Aorta (tissue), 5 donors: ENCODE measurements at regions of chr7 and their contacts with region 1.

Region 1: DNA sequence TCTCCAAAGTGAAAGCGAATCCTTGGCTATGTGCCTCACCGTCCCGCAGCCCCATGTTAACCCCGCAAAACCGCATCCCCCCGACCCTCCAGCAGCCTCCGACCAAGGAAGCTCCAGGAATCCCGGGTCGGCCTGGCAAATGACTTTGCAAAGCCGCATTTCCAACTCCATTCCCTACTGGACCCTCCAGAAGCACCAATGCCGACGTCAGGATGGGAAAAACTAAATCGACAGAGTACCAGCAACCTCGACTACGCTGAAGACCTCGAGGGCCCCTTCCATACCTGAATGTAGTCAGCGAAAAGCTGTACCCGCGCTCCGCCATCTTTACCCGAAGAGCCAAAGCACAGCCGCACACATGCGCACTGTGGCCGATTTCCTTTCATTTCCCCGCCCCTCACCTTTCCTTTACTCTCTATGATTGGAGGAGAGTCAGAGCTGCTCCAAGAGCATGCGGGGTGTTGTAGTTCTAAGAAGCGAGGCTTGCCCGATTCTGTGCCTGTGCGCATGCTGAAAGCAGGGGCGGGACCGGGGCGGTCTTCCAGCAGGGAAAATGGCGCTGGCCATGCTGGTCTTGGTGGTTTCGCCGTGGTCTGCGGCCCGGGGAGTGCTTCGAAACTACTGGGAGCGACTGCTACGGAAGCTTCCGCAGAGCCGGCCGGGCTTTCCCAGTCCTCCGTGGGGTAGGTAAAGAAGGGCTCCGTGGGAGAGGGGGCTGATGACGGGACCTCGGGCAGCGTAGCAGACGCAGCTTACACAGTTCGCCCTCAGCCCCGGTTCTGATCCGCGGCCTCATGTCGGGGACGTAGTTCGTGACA is at the starts of genes MRPL32 and PSMA2:
- DNase-seq: peak; percentile 96 to 97
- ATAC-seq: peak; percentile 99
- H3K4me3 ChIP-seq: peak within 1 kb of the TSS; percentile 78 to 95
- H3K27ac ChIP-seq: peak within 1 kb of the TSS; percentile 57 to 90
- H3K4me1 ChIP-seq: peaks cover 4 to 6% of the 10 kb centered on the region in 2 donors
- H3K27me3 ChIP-seq: no peaks in the 10 kb centered on the region
- total RNA-seq, gene MRPL32: 42.5 to 42.9 TPM
- total RNA-seq, gene PSMA2: 50.4 to 66.3 TPM

Region 2: DNA sequence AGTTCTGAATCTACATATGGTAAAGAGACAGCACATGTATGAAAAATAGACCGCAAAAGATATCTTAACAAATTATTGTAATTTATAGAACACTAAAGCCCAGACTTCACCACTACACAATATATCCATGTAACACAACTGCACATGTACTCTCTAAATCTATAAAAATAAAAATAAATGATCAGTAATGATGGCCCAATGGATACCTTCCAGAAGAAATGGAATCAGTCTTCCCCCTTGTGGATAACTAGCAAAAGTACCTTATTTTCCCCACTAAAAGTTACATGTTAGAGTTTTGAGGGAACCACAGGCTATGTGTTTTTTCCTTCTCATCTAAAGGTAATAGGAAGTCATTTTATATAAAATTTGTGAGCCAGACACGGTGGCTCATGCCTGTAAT is 45.9 kb before region 1 on chr7:
- intact Hi-C with region 1: loop called in 1 of 2 experiments (anchors 2 kb)
- DNase-seq: no peak
- ATAC-seq: no peak
- H3K4me3 ChIP-seq: no peak overlapping the region
- H3K27ac ChIP-seq: no peak overlapping the region
- H3K4me1 ChIP-seq: no peaks in the 10 kb centered on the region
- H3K27me3 ChIP-seq: no peaks in the 10 kb centered on the region

Region 3: GRCh38 chr7:43729214-43729923 is 797.3 kb after region 1 on chr7 and contains the start of gene COA1:
- intact Hi-C with region 1: loop called in 1 of 2 experiments (anchors 10 kb)
- DNase-seq: peak; percentile 90 to 95
- ATAC-seq: peak; percentile 97
- H3K4me3 ChIP-seq: peak within 1 kb of the TSS; percentile 89 to 90
- H3K27ac ChIP-seq: peak within 1 kb of the TSS; percentile 48 to 83
- H3K4me1 ChIP-seq: peaks cover 0 to 2% of the 10 kb centered on the region in 2 donors
- H3K27me3 ChIP-seq: no peaks in the 10 kb centered on the region
- total RNA-seq, gene COA1: 36.5 to 55.6 TPM